Activated CD4-positive, alpha-beta T cell treated with anti-CD3 and anti-CD28 coated beads, Interleukin-2, amount 10 ng/mL, durations not matched to agents 24 days and 14 days (primary cell): ENCODE measurements at regions of chr16 and their contacts with region 1.

Region 1: DNA sequence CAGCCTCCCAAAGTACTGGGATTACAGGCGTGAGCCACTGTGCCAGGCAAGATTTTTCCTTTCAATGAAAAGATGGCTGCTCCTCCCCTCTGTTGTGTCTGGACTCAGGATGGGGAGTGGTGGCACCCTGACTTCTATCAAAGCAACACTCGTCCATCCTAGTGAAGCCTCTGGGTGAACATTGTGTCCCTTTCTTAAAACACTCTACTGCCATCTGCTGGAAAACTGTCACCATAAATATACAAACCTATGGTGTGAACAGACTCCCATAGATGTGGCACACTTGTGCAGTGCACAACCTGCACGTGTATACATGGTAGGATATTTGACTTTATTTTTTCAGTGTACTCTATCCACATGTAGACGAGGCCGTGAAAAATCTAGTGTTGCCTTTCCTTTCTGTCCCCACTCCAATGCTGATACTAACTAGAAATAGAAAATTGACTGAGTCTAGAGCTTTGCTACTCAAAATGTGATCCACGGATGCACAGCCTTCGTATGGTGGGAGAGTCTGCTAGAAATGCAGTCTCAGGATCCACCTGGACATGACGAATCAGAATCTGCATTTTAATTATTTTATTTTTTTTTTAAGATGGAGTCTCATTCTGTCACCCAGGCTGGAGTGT is 55.9 kb upstream of the PLCG2 start:
- DNase-seq: peak; percentile 90
- H3K4me3 Mint-ChIP-seq: no peak overlapping the region
- H3K27ac Mint-ChIP-seq: no peak overlapping the region
- H3K4me1 Mint-ChIP-seq: peaks cover 21% of the 10 kb centered on the region
- H3K27me3 Mint-ChIP-seq: peaks cover 3% of the 10 kb centered on the region

Region 2: GRCh38 chr16:81403616-81404373 is 319.4 kb before region 1 on chr16:
- intact Hi-C with region 1: loop called (anchors 1 kb)
- DNase-seq: peak; percentile 95
- H3K4me3 Mint-ChIP-seq: peak overlapping the region; percentile 39
- H3K27ac Mint-ChIP-seq: no peak overlapping the region
- H3K4me1 Mint-ChIP-seq: peaks cover 2% of the 10 kb centered on the region
- H3K27me3 Mint-ChIP-seq: peaks cover 1% of the 10 kb centered on the region

Region 3: DNA sequence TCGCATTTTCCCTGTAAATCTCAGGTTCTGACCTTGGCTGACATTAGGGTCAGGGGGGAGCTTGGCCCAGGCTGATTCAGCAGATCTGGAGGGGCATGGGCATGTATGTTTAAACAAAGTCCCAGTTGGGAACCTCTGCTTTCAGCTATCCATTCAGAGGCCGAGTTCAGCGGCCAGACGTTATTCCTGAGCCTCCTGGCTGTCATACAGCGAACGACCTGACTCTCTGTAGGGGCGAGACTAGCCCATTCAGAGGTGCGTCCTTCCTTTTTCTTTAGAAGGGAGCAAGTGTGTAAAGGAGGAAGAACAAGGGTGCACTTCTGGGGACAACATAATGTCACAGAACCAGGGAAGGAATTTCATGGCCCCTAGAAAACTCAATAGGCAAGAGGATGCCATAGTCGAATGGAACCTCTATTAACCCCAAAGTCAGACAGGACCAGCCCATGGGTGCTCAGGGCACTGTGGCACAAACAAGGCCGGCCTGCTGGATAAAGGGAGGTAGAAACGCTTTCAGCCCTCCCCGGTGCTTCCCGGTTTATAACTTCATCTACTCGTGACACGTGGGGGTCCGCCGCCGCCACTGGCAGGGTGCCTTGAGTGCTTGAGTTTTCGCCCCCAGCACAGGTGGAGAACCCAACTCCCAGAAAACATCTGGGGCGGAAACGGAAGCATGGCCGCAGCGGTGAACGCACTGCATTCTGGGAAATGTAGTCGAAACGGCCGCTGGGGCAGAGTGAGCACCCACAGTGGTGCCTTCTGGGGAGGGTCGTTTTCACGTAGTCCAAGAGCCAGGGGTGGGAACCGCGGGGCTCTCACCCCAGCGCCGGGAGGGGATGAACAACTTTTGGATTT is 22.7 kb after region 1 on chr16:
- intact Hi-C with region 1: no loop called
- DNase-seq: peak; percentile 93
- H3K4me3 Mint-ChIP-seq: peak overlapping the region; percentile 84
- H3K27ac Mint-ChIP-seq: peak overlapping the region; percentile 86
- H3K4me1 Mint-ChIP-seq: peaks cover 19% of the 10 kb centered on the region
- H3K27me3 Mint-ChIP-seq: no peaks in the 10 kb centered on the region